Activated B cell treated with CpG ODN at 0.5 μM for 24 hours (primary cell): ENCODE measurements at regions of chr20 and their contacts with region 1.

Region 1: GRCh38 chr20:18496740-18497592 is at the start of gene RBBP9:
- DNase-seq: peak; percentile 67
- ATAC-seq: peak; percentile 99
- H3K4me3 Mint-ChIP-seq: peak within 1 kb of the TSS; percentile 99
- H3K27ac Mint-ChIP-seq: peak within 1 kb of the TSS; percentile 87
- H3K4me1 Mint-ChIP-seq: peaks cover 16% of the 10 kb centered on the region
- H3K27me3 Mint-ChIP-seq: peaks cover 3% of the 10 kb centered on the region
- CTCF ChIP-seq: no peak
- total RNA-seq, gene RBBP9: 10.6 TPM in 2 replicates

Region 2: GRCh38 chr20:18237682-18238081 is 259.3 kb before region 1 on chr20:
- CTCF ChIA-PET with region 1: no interaction called
- POLR2A ChIA-PET with region 1: no interaction called
- intact Hi-C with region 1: no loop called
- DNase-seq: no peak
- ATAC-seq: no peak
- H3K4me3 Mint-ChIP-seq: no peak overlapping the region
- H3K27ac Mint-ChIP-seq: no peak overlapping the region
- H3K4me1 Mint-ChIP-seq: no peaks in the 10 kb centered on the region
- H3K27me3 Mint-ChIP-seq: peaks cover 33% of the 10 kb centered on the region
- CTCF ChIP-seq: no peak

Region 3: DNA sequence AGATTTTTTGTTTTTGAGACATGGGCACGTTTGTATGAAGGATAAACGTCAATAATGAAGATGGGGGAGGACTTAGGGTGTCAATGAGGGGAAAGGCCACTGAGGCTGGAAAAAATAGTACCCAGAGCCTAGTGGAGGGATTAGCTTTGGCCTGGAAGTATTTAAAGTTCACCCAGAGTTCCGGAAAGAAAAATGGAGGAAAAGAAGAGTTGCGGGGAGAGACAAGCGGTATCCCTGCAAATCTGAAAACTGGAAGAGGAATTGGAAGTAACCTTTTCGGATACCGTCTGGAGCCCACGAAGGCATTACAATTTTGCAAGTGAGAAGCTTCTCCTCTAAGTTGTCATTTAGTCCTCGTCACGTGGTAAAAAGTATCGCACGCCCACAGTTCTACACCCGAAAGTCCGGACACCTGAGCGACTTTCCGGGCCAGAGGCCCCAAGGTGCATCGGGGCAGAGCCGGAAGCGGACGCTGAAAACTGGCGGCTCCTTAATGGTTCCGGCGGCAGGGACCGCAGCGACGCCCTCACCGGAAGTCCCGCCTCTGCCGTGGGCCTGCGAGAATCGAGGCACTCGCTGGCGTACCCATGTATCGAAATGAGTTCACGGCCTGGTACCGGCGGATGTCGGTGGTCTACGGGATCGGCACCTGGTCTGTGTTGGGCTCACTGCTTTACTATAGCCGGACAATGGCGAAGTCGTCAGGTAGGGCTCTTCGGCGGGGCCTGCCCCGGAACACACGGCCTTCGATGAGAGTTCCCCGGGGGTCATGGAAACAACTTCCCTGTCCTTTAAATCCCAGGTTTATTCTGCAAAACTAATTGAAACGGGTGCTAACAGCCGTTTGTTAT is 70.2 kb after region 1 on chr20 and contains the start of gene SMIM26:
- CTCF ChIA-PET with region 1: no interaction called
- POLR2A ChIA-PET with region 1: no interaction called
- intact Hi-C with region 1: loop called (anchors 1 kb)
- DNase-seq: peak; percentile 91
- ATAC-seq: peak; percentile 96
- H3K4me3 Mint-ChIP-seq: peak within 1 kb of the TSS; percentile 94
- H3K27ac Mint-ChIP-seq: peak within 1 kb of the TSS; percentile 94
- H3K4me1 Mint-ChIP-seq: peaks cover 23% of the 10 kb centered on the region
- H3K27me3 Mint-ChIP-seq: no peaks in the 10 kb centered on the region
- CTCF ChIP-seq: no peak
- total RNA-seq, gene SMIM26: 48.9 and 51.7 TPM in 2 replicates